ENCODE measurements at regions of chr19 and their contacts with region 1.

Region 1: DNA sequence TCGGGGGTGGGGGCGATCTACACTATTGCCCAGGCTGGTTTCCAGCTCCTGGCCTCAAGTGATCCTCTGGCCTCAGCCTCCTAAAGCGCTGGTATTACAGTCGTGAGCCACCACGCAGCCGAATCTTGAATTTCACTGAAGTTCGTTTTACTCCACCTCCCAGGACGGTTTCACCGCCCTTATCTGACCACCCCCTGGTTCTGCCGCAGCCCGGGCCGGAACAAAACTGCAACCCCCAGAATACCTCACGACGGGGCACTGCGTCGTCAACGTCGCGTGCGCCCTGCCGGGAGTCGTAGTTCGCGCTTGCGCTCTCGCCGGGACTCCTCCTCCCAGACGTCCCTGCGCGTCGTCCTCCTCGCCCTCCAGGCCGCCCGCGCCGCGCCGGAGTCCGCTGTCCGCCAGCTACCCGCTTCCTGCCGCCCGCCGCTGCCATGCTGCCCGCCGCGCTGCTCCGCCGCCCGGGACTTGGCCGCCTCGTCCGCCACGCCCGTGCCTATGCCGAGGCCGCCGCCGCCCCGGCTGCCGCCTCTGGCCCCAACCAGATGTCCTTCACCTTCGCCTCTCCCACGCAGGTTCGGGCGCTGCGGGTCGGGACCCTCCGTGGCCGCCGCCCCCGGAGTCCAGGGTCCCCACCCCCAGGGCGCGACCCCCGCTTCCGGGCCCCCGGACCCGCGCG is at the start of gene ATP5F1D:
- DNase-seq: peak; percentile 98
- H3K4me3 Mint-ChIP-seq: peak within 1 kb of the TSS; percentile 82
- H3K27ac Mint-ChIP-seq: peak within 1 kb of the TSS; percentile 85
- H3K4me1 Mint-ChIP-seq: peaks cover 22% of the 10 kb centered on the region
- H3K27me3 Mint-ChIP-seq: peaks cover 12% of the 10 kb centered on the region
- total RNA-seq, gene ATP5F1D: 254 and 269 TPM in 2 replicates

Region 2: DNA sequence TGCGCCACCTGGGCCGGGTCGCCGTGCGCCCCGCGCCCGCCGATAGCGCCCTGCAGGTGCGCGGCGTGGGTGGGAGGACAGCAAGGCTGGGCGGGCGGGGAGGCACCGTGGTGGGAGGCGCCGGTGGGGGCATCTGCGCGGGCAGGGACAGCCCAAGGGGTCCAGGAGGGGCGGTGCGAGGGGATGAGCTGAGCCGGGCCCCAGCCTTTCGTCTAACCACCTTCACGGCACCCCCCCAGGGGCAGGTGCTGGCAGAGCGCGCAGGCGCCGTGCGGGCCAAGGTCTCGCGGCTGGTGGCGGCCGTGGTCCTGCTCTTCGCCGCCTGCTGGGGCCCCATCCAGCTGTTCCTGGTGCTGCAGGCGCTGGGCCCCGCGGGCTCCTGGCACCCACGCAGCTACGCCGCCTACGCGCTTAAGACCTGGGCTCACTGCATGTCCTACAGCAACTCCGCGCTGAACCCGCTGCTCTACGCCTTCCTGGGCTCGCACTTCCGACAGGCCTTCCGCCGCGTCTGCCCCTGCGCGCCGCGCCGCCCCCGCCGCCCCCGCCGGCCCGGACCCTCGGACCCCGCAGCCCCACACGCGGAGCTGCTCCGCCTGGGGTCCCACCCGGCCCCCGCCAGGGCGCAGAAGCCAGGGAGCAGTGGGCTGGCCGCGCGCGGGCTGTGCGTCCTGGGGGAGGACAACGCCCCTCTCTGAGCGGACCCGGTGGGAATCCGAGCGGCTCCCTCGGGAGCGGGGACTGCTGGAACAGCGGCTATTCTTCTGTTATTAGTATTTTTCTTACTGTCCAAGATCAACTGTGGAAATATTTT is 321.3 kb before region 1 on chr19:
- intact Hi-C with region 1: loop called (anchors 2 kb)
- DNase-seq: peak; percentile 90
- H3K4me3 Mint-ChIP-seq: peak overlapping the region; percentile 86
- H3K27ac Mint-ChIP-seq: peak overlapping the region; percentile 92
- H3K4me1 Mint-ChIP-seq: peaks cover 16% of the 10 kb centered on the region
- H3K27me3 Mint-ChIP-seq: peaks cover 2% of the 10 kb centered on the region

Region 3: GRCh38 chr19:1064661-1065605 is 176.6 kb before region 1 on chr19:
- intact Hi-C with region 1: loop called (anchors 5 kb)
- DNase-seq: peak; percentile 94
- H3K4me3 Mint-ChIP-seq: peak overlapping the region; percentile 48
- H3K27ac Mint-ChIP-seq: peak overlapping the region; percentile 44
- H3K4me1 Mint-ChIP-seq: peaks cover 29% of the 10 kb centered on the region
- H3K27me3 Mint-ChIP-seq: no peaks in the 10 kb centered on the region

Region 4: DNA sequence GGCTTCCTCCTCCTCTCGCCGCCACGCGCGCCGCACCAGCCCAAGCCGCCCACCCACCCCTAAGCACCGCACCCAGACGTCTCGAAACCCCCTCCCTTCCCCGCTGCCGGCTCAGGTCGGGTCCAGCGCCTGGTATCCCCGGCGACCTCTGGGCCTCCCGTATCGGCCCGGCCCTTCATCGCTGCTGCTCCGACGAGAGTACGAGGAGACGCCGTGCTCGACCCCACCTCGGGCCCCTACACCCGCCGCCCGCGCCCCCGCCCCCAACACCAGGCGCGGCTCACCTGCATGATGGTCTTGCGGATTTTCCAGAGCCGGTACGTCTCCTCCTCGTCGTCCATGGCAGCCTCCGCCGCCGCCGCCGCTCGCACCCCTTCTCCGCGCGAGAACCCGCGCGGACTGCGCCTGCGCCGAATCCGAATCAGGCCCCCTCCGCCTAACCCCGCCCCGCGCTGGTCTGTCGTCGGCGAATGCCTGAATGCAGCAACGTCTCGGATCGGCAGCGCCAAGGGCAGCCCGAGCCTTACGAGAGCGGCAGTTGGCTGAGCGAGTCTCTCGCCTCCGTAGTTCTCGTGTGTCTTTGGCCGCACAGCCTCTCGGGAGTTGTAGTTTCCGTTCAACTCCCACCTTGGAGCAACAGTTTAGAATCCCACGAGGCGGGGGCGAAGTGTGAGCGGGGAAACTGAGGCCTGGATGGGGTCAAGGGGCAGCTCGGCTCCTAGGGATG is 146.4 kb before region 1 on chr19 and contains the start of gene POLR2E:
- intact Hi-C with region 1: loop called (anchors 2 kb)
- DNase-seq: peak; percentile 100
- H3K4me3 Mint-ChIP-seq: peak within 1 kb of the TSS; percentile 95
- H3K27ac Mint-ChIP-seq: peak within 1 kb of the TSS; percentile 93
- H3K4me1 Mint-ChIP-seq: peaks cover 37% of the 10 kb centered on the region
- H3K27me3 Mint-ChIP-seq: no peaks in the 10 kb centered on the region
- total RNA-seq, gene POLR2E: 273 and 274 TPM in 2 replicates

Region 5: DNA sequence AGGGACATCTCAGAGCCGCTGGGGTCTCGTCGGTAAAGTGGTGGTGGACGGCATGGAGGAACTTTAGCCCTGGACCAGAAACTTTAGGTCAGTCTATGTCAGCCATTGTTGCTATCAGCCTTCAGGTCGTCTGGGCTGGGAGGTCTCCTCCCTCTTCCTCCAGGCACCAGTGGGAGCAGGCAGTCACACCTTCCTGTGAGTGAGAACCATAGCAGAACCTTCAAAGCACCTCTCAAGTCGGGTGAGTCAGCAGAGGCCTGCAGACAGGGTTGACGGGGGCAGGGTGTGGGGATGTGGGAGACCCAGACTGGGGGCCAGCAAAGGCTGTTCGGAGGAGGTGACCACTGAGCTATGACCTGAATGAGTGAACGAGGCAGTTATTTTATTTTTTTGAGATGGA is 52.1 kb before region 1 on chr19:
- intact Hi-C with region 1: loop called (anchors 5 kb)
- DNase-seq: peak; percentile 85
- H3K4me3 Mint-ChIP-seq: peak overlapping the region; percentile 36
- H3K27ac Mint-ChIP-seq: peak overlapping the region; percentile 68
- H3K4me1 Mint-ChIP-seq: peaks cover 27% of the 10 kb centered on the region
- H3K27me3 Mint-ChIP-seq: no peaks in the 10 kb centered on the region

Region 6: DNA sequence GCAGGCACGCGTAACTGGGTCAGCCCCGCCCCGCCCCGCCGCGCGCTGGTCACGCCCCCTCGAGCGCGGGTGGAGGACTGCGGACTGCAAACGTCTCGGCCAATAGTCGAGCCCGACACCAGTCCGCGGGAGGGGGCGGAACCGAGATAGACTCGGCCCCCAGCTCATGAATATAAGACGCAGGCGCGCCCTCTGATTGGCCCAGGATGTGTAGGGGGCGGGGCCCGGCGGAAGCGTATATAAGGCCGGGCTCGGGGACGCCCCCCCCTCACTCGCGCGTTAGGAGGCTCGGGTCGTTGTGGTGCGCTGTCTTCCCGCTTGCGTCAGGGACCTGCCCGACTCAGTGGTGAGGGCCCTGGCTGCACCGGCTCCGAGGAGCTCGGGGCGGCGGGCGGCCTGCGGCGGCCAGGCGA is 27.5 kb after region 1 on chr19 and contains the start of gene CIRBP:
- intact Hi-C with region 1: loop called (anchors 1 kb)
- DNase-seq: peak; percentile 100
- H3K4me3 Mint-ChIP-seq: peak within 1 kb of the TSS; percentile 95
- H3K27ac Mint-ChIP-seq: peak within 1 kb of the TSS; percentile 94
- H3K4me1 Mint-ChIP-seq: peaks cover 52% of the 10 kb centered on the region
- H3K27me3 Mint-ChIP-seq: no peaks in the 10 kb centered on the region
- total RNA-seq, gene CIRBP: 237 TPM in 2 replicates

Region 7: GRCh38 chr19:1490311-1491113 is 249.0 kb after region 1 on chr19 and contains the start of gene PCSK4:
- intact Hi-C with region 1: no loop called
- DNase-seq: peak; percentile 99
- H3K4me3 Mint-ChIP-seq: peak within 1 kb of the TSS; percentile 90
- H3K27ac Mint-ChIP-seq: peak within 1 kb of the TSS; percentile 85
- H3K4me1 Mint-ChIP-seq: peaks cover 6% of the 10 kb centered on the region
- H3K27me3 Mint-ChIP-seq: peaks cover 8% of the 10 kb centered on the region
- total RNA-seq, gene PCSK4: 1.0 and 1.6 TPM in 2 replicates